ENCODE measurements at regions of chr17 and their contacts with region 1.

Region 1: GRCh38 chr17:48084932-48085444 is 16.3 kb downstream of the CBX1 start:
- DNase-seq: no peak
- ATAC-seq: no peak
- H3K4me3 Mint-ChIP-seq: no peak overlapping the region
- H3K27ac Mint-ChIP-seq: no peak overlapping the region
- H3K4me1 Mint-ChIP-seq: peaks cover 12% of the 10 kb centered on the region
- H3K27me3 Mint-ChIP-seq: no peaks in the 10 kb centered on the region

Region 2: DNA sequence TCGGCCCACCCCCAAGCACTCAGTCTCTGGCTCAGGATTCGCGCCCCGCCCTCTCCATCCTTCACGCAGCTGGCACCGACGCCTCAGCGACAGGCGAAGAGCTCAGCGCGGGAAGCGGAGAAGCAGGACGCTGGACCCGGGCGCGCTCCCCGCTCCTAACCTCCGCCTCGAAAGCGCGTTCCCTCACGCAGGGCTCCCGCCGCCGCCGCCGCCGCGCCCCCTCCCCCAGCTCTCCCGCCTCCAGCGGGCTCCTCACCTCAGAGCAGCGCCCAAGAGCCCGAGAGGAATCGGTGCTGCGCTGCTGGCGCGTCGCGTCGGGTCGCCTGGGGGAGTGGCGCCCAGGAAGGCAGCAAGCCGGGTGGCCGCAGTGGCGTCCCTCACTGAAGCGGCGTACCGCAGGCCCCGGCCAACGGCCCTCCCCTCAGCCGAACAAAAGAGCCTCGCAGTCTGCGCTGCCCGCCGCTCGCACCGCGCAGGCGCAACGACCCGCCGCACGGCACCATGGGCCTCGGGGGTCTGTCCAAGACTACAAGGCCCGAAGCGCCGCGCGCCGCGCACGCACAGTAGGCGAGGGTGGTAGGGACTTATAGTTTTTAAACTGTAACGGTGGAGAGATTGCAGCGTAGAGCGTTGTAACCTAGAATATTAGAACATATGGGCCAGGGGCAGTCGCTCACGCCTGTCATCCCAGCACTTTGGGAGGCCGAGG is 16.2 kb after region 1 on chr17 and contains the start of gene CBX1:
- CTCF ChIA-PET with region 1: interaction called, 69 read pairs
- DNase-seq: peak; percentile 97
- ATAC-seq: peak; percentile 97
- H3K4me3 Mint-ChIP-seq: peak within 1 kb of the TSS; percentile 91
- H3K27ac Mint-ChIP-seq: peak within 1 kb of the TSS; percentile 88
- H3K4me1 Mint-ChIP-seq: peaks cover 49% of the 10 kb centered on the region
- H3K27me3 Mint-ChIP-seq: no peaks in the 10 kb centered on the region
- total RNA-seq, gene CBX1: 46.3 to 47.8 TPM

Region 3: GRCh38 chr17:48107168-48108132 is 22.5 kb after region 1 on chr17 and contains the start of gene SNX11:
- CTCF ChIA-PET with region 1: interaction called, 69 read pairs
- DNase-seq: peak; percentile 96
- ATAC-seq: peak; percentile 95
- H3K4me3 Mint-ChIP-seq: peak within 1 kb of the TSS; percentile 96
- H3K27ac Mint-ChIP-seq: peak within 1 kb of the TSS; percentile 93
- H3K4me1 Mint-ChIP-seq: peaks cover 64% of the 10 kb centered on the region
- H3K27me3 Mint-ChIP-seq: no peaks in the 10 kb centered on the region
- total RNA-seq, gene SNX11: 25.1 to 32.6 TPM

Region 4: DNA sequence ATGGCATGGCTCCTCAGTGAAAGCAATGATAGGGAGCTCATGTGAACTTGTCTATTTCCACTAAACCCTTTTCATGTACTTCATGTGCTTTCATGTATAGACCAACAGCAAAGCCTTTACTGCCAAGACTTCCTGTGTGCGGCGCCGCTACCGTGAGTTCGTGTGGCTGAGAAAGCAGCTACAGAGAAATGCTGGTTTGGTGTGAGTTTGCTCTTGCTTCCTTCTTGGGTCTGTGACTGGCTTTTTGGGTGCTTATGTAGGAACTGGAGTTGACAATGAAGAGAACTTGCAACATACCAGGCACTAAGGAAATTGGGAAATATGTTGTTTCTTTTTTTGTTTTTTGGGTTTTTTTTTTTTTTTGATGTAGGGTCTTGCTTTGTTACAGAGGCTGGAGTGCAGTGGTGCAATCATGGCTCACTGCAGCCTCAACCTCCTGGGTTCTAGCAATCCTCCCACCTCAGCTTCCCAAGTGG is 28.3 kb after region 1 on chr17:
- CTCF ChIA-PET with region 1: interaction called, 28 read pairs
- DNase-seq: peak; percentile 78
- ATAC-seq: peak; percentile 86
- H3K4me3 Mint-ChIP-seq: peak overlapping the region; percentile 49
- H3K27ac Mint-ChIP-seq: peak overlapping the region; percentile 95
- H3K4me1 Mint-ChIP-seq: peaks cover 45% of the 10 kb centered on the region
- H3K27me3 Mint-ChIP-seq: no peaks in the 10 kb centered on the region

Region 5: DNA sequence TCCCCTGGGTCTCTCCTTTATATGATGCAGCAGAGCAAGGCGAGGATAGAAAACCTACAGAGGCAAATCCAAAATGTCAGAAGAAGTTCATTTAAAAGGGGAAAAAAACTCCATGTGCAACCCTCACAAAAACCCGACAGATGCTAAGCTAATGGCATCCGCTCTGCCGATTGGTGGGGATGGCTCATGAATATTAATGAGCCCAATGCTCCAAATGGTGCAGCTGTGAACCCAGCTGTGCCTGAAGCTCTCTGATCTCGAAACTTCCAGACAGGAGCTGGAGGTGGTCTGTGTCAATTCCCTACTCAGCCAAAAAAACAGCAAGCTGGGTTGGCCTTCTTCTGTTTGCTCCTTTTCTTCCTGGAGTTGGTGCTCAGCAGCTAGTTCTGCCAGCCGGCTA is 38.1 kb after region 1 on chr17:
- CTCF ChIA-PET with region 1: interaction called, 113 read pairs
- DNase-seq: no peak
- ATAC-seq: no peak
- H3K4me3 Mint-ChIP-seq: no peak overlapping the region
- H3K27ac Mint-ChIP-seq: peak overlapping the region; percentile 9
- H3K4me1 Mint-ChIP-seq: peaks cover 6% of the 10 kb centered on the region
- H3K27me3 Mint-ChIP-seq: no peaks in the 10 kb centered on the region

Region 6: GRCh38 chr17:48131216-48131824 is 46.3 kb after region 1 on chr17:
- CTCF ChIA-PET with region 1: interaction called, 113 read pairs
- DNase-seq: peak; percentile 57
- ATAC-seq: peak; percentile 67
- H3K4me3 Mint-ChIP-seq: no peak overlapping the region
- H3K27ac Mint-ChIP-seq: no peak overlapping the region
- H3K4me1 Mint-ChIP-seq: no peaks in the 10 kb centered on the region
- H3K27me3 Mint-ChIP-seq: no peaks in the 10 kb centered on the region